Activated B cell treated with CpG ODN at 0.5 μM for 24 hours (primary cell): ENCODE measurements at regions of chr7 and their contacts with region 1.

Region 1: GRCh38 chr7:22743014-22743413 is 16.0 kb downstream of the IL6 start:
- DNase-seq: no peak
- ATAC-seq: no peak
- H3K4me3 Mint-ChIP-seq: no peak overlapping the region
- H3K27ac Mint-ChIP-seq: no peak overlapping the region
- H3K4me1 Mint-ChIP-seq: peaks cover 2% of the 10 kb centered on the region
- H3K27me3 Mint-ChIP-seq: no peaks in the 10 kb centered on the region
- CTCF ChIP-seq: no peak

Region 2: DNA sequence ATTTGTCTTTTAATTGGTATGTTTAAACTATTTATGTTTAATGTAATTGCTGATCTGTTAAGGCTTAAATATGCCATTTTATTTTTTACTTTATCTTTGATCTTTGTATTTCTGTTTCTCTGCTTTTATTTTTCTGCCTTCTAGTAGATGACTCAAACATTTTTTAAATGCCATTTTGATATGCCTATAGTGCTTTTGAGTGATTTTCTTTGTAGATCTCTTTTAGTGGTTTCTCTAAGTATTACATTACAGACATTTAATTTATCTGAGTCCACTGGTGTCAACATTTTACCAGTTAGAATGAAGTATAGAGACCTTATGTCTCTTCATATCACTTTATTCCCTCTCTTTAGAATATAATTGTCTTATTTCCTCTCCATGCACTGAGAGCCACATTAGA is 16.7 kb after region 1 on chr7:
- CTCF ChIA-PET with region 1: no interaction called
- POLR2A ChIA-PET with region 1: no interaction called
- intact Hi-C with region 1: loop called (anchors 2 kb)
- DNase-seq: no peak
- ATAC-seq: no peak
- H3K4me3 Mint-ChIP-seq: no peak overlapping the region
- H3K27ac Mint-ChIP-seq: no peak overlapping the region
- H3K4me1 Mint-ChIP-seq: peaks cover 3% of the 10 kb centered on the region
- H3K27me3 Mint-ChIP-seq: no peaks in the 10 kb centered on the region
- CTCF ChIP-seq: no peak

Region 3: GRCh38 chr7:22776964-22777363 is 34.0 kb after region 1 on chr7:
- CTCF ChIA-PET with region 1: interaction called, 3 read pairs
- POLR2A ChIA-PET with region 1: no interaction called
- intact Hi-C with region 1: loop called (anchors 5 kb)
- DNase-seq: no peak
- ATAC-seq: no peak
- H3K4me3 Mint-ChIP-seq: no peak overlapping the region
- H3K27ac Mint-ChIP-seq: no peak overlapping the region
- H3K4me1 Mint-ChIP-seq: no peaks in the 10 kb centered on the region
- H3K27me3 Mint-ChIP-seq: no peaks in the 10 kb centered on the region
- CTCF ChIP-seq: no peak